Esophagus muscularis mucosa (tissue), 4 donors: ENCODE measurements at regions of chr3 and their contacts with region 1.

Region 1: GRCh38 chr3:12994607-12995388 is 78.4 kb downstream of the IQSEC1 start:
- DNase-seq: peak; percentile 96
- H3K4me3 ChIP-seq: peak overlapping the region; percentile 78 to 90 (median 84)
- H3K27ac ChIP-seq: peak overlapping the region; percentile 88 to 92 (median 90)
- H3K4me1 ChIP-seq: peaks cover 39 to 64% (median 42%) of the 10 kb centered on the region in 4 donors
- H3K27me3 ChIP-seq: no peaks in the 10 kb centered on the region
- CTCF ChIP-seq: peak in 2 of 3 experiments; percentile 88 to 91
- EP300 ChIP-seq: no peak
- POLR2A ChIP-seq: peak; percentile 58

Region 2: GRCh38 chr3:12574661-12575060 is 420.1 kb before region 1 on chr3:
- intact Hi-C with region 1: no loop called
- DNase-seq: no peak
- H3K4me3 ChIP-seq: no peak overlapping the region
- H3K27ac ChIP-seq: no peak overlapping the region
- H3K4me1 ChIP-seq: peaks cover 0 to 9% (median 7%) of the 10 kb centered on the region in 4 donors
- H3K27me3 ChIP-seq: no peaks in the 10 kb centered on the region
- CTCF ChIP-seq: no peak
- EP300 ChIP-seq: no peak
- POLR2A ChIP-seq: no peak

Region 3: GRCh38 chr3:12758025-12758830 is 236.6 kb before region 1 on chr3:
- intact Hi-C with region 1: no loop called
- DNase-seq: no peak
- H3K4me3 ChIP-seq: no peak overlapping the region
- H3K27ac ChIP-seq: peak overlapping the region; percentile 72 to 80 (median 78)
- H3K4me1 ChIP-seq: peaks cover 14 to 23% (median 20%) of the 10 kb centered on the region in 4 donors
- H3K27me3 ChIP-seq: no peaks in the 10 kb centered on the region
- CTCF ChIP-seq: no peak
- EP300 ChIP-seq: no peak
- POLR2A ChIP-seq: no peak

Region 4: GRCh38 chr3:12868039-12869034 is 126.5 kb before region 1 on chr3:
- intact Hi-C with region 1: loop called (anchors 2 kb)
- DNase-seq: no peak
- H3K4me3 ChIP-seq: peak overlapping the region; percentile 16 to 40 (median 34)
- H3K27ac ChIP-seq: peak overlapping the region in 2 of 4 donors; percentile 31 to 48
- H3K4me1 ChIP-seq: peaks cover 11 to 15% (median 14%) of the 10 kb centered on the region in 4 donors
- H3K27me3 ChIP-seq: peaks cover 0 to 5% (median 0%) of the 10 kb centered on the region in 4 donors
- CTCF ChIP-seq: peak; percentile 90 to 95 (median 93)
- EP300 ChIP-seq: no peak
- POLR2A ChIP-seq: no peak

Region 5: DNA sequence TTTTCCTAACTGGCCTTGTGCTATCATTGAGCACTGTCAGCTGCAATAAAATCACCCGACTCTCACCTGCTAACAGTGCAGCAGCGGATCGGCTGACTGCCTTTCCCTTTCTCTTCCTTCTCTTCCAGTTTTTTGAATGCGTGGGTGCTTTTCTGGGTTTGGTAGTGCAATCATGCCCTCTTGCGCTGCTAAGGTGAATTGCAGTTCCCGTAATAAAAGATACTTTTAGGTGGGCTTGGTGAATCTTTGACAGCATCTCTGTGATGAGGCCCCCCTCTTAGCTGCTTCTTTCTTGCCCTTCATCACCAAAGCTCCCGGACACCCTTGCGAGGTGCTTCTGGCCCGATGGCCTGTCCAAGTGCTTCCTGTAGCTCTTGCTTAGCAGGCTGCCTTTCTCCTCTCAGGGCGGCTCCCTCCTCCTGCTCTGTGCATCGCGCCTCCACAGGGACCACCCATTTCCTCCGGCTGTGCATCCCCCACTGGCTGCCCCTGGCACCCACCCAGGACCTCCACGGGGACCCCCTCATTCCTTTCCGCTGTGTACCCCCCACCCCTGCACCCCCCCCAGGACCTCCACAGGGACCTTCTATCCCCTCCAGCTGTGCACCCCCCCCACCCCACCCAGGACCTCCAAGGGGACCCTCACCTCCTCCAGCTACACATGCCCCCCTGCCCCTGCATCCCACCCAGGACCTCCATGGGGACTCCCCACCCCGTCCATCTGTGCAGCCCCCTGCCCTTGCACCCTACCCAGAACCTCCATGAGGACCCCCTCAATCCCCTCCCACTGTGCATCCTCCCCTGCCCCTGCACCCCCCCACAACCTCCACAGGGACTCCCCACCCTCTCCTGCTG is 102.6 kb before region 1 on chr3:
- intact Hi-C with region 1: loop called (anchors 5 kb)
- DNase-seq: no peak
- H3K4me3 ChIP-seq: peak overlapping the region; percentile 29 to 48 (median 36)
- H3K27ac ChIP-seq: no peak overlapping the region
- H3K4me1 ChIP-seq: peaks cover 31 to 55% (median 50%) of the 10 kb centered on the region in 4 donors
- H3K27me3 ChIP-seq: no peaks in the 10 kb centered on the region
- CTCF ChIP-seq: peak; percentile 81 to 96 (median 95)
- EP300 ChIP-seq: no peak
- POLR2A ChIP-seq: no peak

Region 6: GRCh38 chr3:12954891-12955650 is 39.7 kb before region 1 on chr3:
- intact Hi-C with region 1: loop called (anchors 5 kb)
- DNase-seq: peak; percentile 93
- H3K4me3 ChIP-seq: peak overlapping the region in 1 of 4 donors; percentile 10
- H3K27ac ChIP-seq: peak overlapping the region; percentile 76 to 81 (median 79)
- H3K4me1 ChIP-seq: peaks cover 80 to 95% (median 86%) of the 10 kb centered on the region in 4 donors
- H3K27me3 ChIP-seq: no peaks in the 10 kb centered on the region
- CTCF ChIP-seq: peak; percentile 24 to 41 (median 35)
- EP300 ChIP-seq: no peak
- POLR2A ChIP-seq: no peak

Region 7: GRCh38 chr3:13141991-13142412 is 147.2 kb after region 1 on chr3:
- intact Hi-C with region 1: no loop called
- DNase-seq: no peak
- H3K4me3 ChIP-seq: no peak overlapping the region
- H3K27ac ChIP-seq: no peak overlapping the region
- H3K4me1 ChIP-seq: no peaks in the 10 kb centered on the region
- H3K27me3 ChIP-seq: peaks cover 0 to 40% (median 0%) of the 10 kb centered on the region in 4 donors
- CTCF ChIP-seq: no peak
- EP300 ChIP-seq: no peak
- POLR2A ChIP-seq: no peak

Region 8: DNA sequence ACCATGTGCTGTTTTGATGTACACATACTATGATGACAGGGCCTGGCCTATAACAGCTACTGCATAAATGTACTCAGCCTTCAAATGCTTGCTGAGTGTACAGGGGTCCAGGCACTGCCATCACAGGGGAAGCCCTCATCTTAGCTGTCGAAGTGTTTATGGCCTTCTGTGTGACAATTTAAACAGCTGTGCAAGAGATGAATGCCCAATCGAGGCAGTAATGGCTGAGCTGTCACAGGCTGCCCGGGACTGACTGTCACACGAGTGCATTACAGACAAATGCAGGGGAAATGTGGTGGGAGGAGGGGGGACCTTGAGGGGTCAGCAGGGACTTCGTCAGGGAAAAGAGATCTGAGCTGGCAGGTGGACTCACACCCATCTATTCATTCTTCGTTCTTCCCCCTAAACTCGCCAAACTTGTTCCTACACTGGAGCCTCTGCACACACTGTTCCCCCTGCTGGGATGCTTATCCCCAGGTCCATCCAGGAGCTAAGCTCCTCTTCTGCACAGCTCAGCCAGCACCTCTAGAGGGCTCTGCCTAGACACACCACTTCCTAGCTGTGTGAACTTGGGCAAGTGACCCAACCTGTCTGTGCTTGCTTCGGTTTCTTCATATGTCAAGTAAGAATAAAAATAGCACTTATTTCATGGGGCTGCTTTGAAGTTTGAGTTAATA is 234.6 kb after region 1 on chr3:
- intact Hi-C with region 1: no loop called
- DNase-seq: no peak
- H3K4me3 ChIP-seq: no peak overlapping the region
- H3K27ac ChIP-seq: no peak overlapping the region
- H3K4me1 ChIP-seq: peaks cover 0 to 3% (median 1%) of the 10 kb centered on the region in 4 donors
- H3K27me3 ChIP-seq: peaks cover 0 to 29% (median 2%) of the 10 kb centered on the region in 4 donors
- CTCF ChIP-seq: no peak
- EP300 ChIP-seq: no peak
- POLR2A ChIP-seq: no peak